ENCODE measurements at regions of chr11 and their contacts with region 1.

Region 1: GRCh38 chr11:119168471-119169281 is at the start of gene NLRX1:
- DNase-seq: peak; percentile 19
- H3K4me3 ChIP-seq: peak within 1 kb of the TSS; percentile 70
- CTCF ChIP-seq: peak; percentile 93

Region 2: DNA sequence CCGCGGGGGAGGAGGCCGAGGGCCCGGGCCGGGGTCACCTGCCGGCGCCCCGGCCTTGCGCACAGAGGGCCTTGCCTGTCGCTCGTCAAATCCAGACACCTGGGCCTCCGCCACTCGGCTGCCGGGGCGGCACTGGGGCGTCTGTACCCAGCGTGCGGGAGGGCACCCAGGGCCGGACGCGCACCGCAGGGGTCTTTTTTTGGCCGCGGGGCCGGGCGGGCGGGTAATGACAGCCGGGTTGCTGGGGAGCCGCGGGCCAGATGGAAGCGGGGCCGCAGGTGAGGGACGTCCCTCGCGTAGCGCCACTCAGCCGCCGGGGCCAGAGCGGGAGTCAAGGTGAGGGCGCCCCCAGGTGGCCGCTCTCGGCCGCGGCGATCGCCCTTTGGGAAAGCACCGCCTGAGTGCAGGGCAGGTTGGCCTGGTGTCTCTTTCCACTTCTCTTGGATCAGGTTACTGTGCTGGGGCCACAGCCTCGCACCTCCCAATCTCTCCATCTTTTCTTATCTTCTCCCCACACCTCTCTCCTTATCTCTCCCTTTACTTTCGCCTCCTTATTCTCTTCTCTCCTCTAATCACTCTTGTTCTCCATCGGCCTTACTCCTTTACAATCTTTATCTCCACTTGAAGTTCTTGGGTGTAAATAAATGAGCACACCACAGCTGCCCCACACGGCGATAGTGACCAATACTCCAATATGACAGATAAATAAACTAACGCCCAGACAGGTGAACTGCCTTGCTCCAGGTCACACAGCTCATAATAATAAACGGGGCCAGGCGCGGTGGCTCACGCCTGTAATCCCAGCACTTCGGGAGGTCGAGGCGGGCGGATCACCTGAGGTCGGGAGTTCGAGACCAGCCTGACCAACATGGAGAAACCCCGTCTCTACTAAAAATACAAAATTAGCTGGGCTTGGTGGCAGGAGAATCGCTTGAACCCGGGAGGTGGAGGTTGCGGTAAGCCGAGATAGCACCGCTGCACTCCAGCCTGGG is 557.6 kb before region 1 on chr11:
- CTCF ChIA-PET with region 1: no interaction called
- POLR2A ChIA-PET with region 1: no interaction called
- DNase-seq: no peak
- H3K4me3 ChIP-seq: peak overlapping the region; percentile 80
- CTCF ChIP-seq: peak; percentile 92

Region 3: GRCh38 chr11:119181677-119182412 is 13.2 kb after region 1 on chr11:
- CTCF ChIA-PET with region 1: interaction called, 14 read pairs
- POLR2A ChIA-PET with region 1: interaction called, 3 read pairs
- DNase-seq: no peak
- H3K4me3 ChIP-seq: no peak overlapping the region
- CTCF ChIP-seq: no peak

Region 4: GRCh38 chr11:119484741-119485605 is 316.3 kb after region 1 on chr11:
- CTCF ChIA-PET with region 1: no interaction called
- POLR2A ChIA-PET with region 1: no interaction called
- DNase-seq: no peak
- H3K4me3 ChIP-seq: no peak overlapping the region
- CTCF ChIP-seq: no peak

Measured in AG04449 (cell line).